ENCODE measurements at regions of chr2 and their contacts with region 1.

Region 1: GRCh38 chr2:229586746-229587705 is 127.3 kb downstream of the DNER start:
- DNase-seq: peak; percentile 70 to 87 (median 79)
- ATAC-seq: peak; percentile 100
- H3K4me3 ChIP-seq: peak overlapping the region in 1 of 2 donors; percentile 6
- H3K27ac ChIP-seq: no peak overlapping the region
- H3K4me1 ChIP-seq: no peaks in the 10 kb centered on the region
- H3K27me3 ChIP-seq: no peaks in the 10 kb centered on the region
- CTCF ChIP-seq: peak; percentile 72 to 80

Region 2: GRCh38 chr2:229133155-229133772 is 453.8 kb before region 1 on chr2:
- intact Hi-C with region 1: loop called in 1 of 2 experiments (anchors 5 kb)
- DNase-seq: peak in 2 of 4 donors; percentile 24 to 45
- ATAC-seq: peak; percentile 63
- H3K4me3 ChIP-seq: no peak overlapping the region
- H3K27ac ChIP-seq: no peak overlapping the region
- H3K4me1 ChIP-seq: peaks cover 0 to 4% of the 10 kb centered on the region in 2 donors
- H3K27me3 ChIP-seq: no peaks in the 10 kb centered on the region
- CTCF ChIP-seq: peak in 1 of 2 donors; percentile 39

Region 3: DNA sequence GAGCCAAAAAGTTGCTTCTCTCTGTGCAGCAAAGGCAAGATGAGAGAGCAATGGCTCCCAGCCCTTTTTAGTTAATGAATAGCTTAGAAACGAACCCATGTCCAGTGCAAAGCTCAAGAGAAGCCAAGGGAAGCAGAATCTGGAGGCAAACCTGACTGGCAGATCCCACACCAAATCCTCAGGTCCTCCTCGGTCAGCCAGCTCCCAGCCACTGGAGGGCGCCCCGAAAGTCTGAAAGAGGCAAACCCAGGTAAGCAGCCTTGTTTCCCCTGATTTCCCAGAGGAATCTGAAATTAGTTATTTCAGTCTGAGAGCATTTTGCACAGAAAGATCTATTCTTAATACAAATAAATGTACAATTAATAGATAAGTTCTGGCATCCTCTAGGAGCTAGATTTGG is 244.7 kb before region 1 on chr2:
- intact Hi-C with region 1: loop called in 1 of 2 experiments (anchors 10 kb)
- DNase-seq: peak in 3 of 4 donors; percentile 16 to 83 (median 47)
- ATAC-seq: peak; percentile 74
- H3K4me3 ChIP-seq: no peak overlapping the region
- H3K27ac ChIP-seq: no peak overlapping the region
- H3K4me1 ChIP-seq: peaks cover 0 to 5% of the 10 kb centered on the region in 2 donors
- H3K27me3 ChIP-seq: no peaks in the 10 kb centered on the region
- CTCF ChIP-seq: peak; percentile 37 to 38